ENCODE measurements at regions of chr9 and their contacts with region 1.

Region 1: DNA sequence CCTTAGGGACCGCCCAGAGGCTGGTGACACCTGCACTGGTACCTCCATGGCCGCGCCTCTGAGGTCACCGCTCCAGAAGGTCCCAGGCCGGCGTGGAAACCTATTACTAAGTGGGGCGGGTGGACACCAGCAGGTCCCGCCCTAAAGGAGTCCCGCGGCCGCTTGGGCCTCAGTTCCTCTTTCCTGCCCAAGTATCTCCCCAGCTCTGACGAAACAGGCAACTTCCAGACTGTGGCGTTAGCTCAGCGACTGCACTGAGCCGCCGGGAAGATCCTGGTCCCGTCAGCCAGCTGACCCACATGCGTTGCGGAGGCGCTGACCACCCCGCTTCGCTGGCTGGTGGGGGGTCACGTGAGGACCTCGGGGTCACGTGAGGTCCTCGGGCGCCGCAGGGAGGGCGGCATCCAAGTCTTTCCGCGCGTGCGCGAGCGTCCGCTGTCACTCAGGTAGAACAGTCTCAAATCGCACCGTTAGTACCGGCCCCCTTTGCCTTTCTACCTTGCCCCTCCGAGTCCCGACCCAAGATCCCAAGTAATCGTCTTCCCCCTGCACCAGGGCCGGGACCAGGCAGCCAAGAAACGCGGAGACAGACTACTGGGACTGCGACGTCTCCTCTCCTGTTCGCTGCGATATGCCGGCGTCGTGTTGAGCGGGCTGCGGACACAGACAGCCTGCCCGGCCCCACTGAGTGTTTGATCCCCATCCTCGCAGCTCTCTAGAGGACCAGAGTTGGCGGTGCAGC is 53.7 kb upstream of the KDM4C start:
- DNase-seq: no peak
- H3K4me3 Mint-ChIP-seq: no peak overlapping the region
- H3K27ac Mint-ChIP-seq: no peak overlapping the region
- H3K4me1 Mint-ChIP-seq: no peaks in the 10 kb centered on the region
- H3K27me3 Mint-ChIP-seq: no peaks in the 10 kb centered on the region
- CTCF ChIP-seq: no peak

Region 2: GRCh38 chr9:6715755-6716643 is 11.9 kb after region 1 on chr9:
- CTCF ChIA-PET with region 1: interaction called, 12 read pairs
- intact Hi-C with region 1: no loop called
- DNase-seq: peak; percentile 68
- H3K4me3 Mint-ChIP-seq: peak overlapping the region; percentile 81
- H3K27ac Mint-ChIP-seq: peak overlapping the region; percentile 85
- H3K4me1 Mint-ChIP-seq: no peaks in the 10 kb centered on the region
- H3K27me3 Mint-ChIP-seq: no peaks in the 10 kb centered on the region
- CTCF ChIP-seq: no peak

Measured in Calu3 (cell line).